ENCODE measurements at regions of chr11 and their contacts with region 1.

Region 1: DNA sequence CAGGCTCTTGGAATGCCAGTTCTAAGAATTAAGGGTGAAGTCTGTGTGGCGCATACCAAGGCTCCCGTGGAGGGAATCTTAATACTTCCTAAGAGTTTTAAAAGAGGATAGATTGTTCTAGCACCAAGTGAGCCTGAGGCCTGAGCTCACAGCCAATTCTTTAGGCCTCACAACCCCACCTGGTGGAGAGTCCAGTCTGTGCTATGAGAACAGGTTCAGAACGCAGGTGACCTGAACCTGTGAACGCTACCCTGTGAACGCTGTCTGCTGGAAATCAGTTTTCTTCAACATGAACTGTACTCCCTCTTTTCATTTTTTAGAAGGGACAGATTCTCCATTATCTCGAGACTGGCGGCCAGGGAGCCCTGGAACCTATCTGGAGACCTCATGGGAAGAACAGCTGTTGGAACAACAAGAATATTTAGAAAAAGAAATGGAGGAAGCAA is 43.2 kb upstream of the DLAT start:
- DNase-seq: peak; percentile 79
- H3K4me3 Mint-ChIP-seq: no peak overlapping the region
- H3K27ac Mint-ChIP-seq: peak overlapping the region; percentile 77
- H3K4me1 Mint-ChIP-seq: peaks cover 19% of the 10 kb centered on the region
- H3K27me3 Mint-ChIP-seq: no peaks in the 10 kb centered on the region
- CTCF ChIP-seq: peak; percentile 73

Region 2: GRCh38 chr11:111870886-111871692 is 111.0 kb before region 1 on chr11 and contains the start of gene ALG9:
- CTCF ChIA-PET with region 1: interaction called, 43 read pairs
- POLR2A ChIA-PET with region 1: interaction called, 19 read pairs
- intact Hi-C with region 1: no loop called
- DNase-seq: peak; percentile 82
- H3K4me3 Mint-ChIP-seq: peak within 1 kb of the TSS; percentile 96
- H3K27ac Mint-ChIP-seq: peak within 1 kb of the TSS; percentile 57
- H3K4me1 Mint-ChIP-seq: peaks cover 12% of the 10 kb centered on the region
- H3K27me3 Mint-ChIP-seq: no peaks in the 10 kb centered on the region
- CTCF ChIP-seq: peak; percentile 44
- total RNA-seq, gene ALG9: 28.8 and 31.2 TPM in 2 replicates

Region 3: DNA sequence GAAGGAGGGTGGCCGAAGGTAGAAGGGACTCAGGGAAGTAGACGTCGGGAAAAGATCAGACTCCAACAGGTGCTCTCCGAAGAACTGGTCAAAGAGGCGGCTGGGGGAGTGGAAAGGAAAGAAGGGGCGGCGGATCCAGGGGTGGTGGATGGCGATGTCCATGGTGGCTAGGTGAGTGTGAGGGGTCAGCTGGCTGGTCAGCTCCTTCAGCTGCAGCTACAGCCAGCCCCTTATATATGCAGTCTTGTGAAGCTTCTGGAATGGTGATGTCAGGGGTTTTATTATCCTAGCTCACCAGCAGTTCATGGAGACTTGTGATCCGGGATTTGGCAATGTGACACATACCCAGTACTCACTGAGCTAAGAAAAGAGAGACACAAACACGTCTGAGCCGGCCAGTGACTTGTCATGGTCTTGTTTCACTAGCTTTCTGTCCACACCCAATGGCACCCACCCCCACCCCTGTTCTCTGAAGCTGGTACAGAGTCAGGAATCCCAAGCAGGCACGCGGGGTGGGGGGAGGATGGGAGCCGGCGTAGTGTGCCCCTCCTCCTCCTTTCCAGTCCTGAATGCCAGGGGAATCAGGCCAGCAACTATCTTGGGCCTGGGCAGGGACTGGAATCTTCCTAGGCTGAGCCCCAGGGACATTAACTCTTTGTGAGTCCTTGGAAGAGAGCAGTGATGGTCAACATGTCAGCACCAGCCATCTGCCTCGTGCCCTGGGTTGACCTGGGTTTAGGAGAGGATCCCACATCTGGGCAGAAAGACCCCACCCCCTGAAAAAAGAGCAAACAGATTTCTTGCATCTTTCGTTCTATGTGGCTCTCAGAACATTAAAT is 70.3 kb before region 1 on chr11 and contains the start of gene CRYAB:
- CTCF ChIA-PET with region 1: interaction called, 9 read pairs
- POLR2A ChIA-PET with region 1: interaction called, 10 read pairs
- intact Hi-C with region 1: no loop called
- DNase-seq: peak; percentile 61
- H3K4me3 Mint-ChIP-seq: peak within 1 kb of the TSS; percentile 41
- H3K27ac Mint-ChIP-seq: peak within 1 kb of the TSS; percentile 86
- H3K4me1 Mint-ChIP-seq: peaks cover 18% of the 10 kb centered on the region
- H3K27me3 Mint-ChIP-seq: no peaks in the 10 kb centered on the region
- CTCF ChIP-seq: no peak
- total RNA-seq, gene CRYAB: 1.2 and 2.5 TPM in 2 replicates

Region 4: GRCh38 chr11:111926505-111927391 is 55.3 kb before region 1 on chr11:
- CTCF ChIA-PET with region 1: interaction called, 564 read pairs
- POLR2A ChIA-PET with region 1: interaction called, 513 read pairs
- intact Hi-C with region 1: loop called (anchors 1 kb)
- DNase-seq: peak; percentile 95
- H3K4me3 Mint-ChIP-seq: peak overlapping the region; percentile 73
- H3K27ac Mint-ChIP-seq: peak overlapping the region; percentile 66
- H3K4me1 Mint-ChIP-seq: peaks cover 22% of the 10 kb centered on the region
- H3K27me3 Mint-ChIP-seq: no peaks in the 10 kb centered on the region
- CTCF ChIP-seq: no peak

Region 5: GRCh38 chr11:111996129-111996528 is 14.1 kb after region 1 on chr11:
- CTCF ChIA-PET with region 1: interaction called, 10 read pairs
- POLR2A ChIA-PET with region 1: interaction called, 4 read pairs
- intact Hi-C with region 1: no loop called
- DNase-seq: no peak
- H3K4me3 Mint-ChIP-seq: no peak overlapping the region
- H3K27ac Mint-ChIP-seq: no peak overlapping the region
- H3K4me1 Mint-ChIP-seq: no peaks in the 10 kb centered on the region
- H3K27me3 Mint-ChIP-seq: no peaks in the 10 kb centered on the region
- CTCF ChIP-seq: no peak

Measured in MCF 10A (cell line).